ENCODE measurements at regions of chr16 and their contacts with region 1.

Region 1: GRCh38 chr16:79613009-79613408 is 12.5 kb upstream of the MAF start:
- DNase-seq: no peak
- ATAC-seq: no peak

Region 2: GRCh38 chr16:78220571-78220970 is 1392.4 kb before region 1 on chr16:
- intact Hi-C with region 1: loop called (anchors 5 kb)
- DNase-seq: no peak
- ATAC-seq: no peak

Region 3: GRCh38 chr16:79673635-79674034 is 60.6 kb after region 1 on chr16:
- intact Hi-C with region 1: no loop called
- DNase-seq: no peak
- ATAC-seq: no peak

Region 4: DNA sequence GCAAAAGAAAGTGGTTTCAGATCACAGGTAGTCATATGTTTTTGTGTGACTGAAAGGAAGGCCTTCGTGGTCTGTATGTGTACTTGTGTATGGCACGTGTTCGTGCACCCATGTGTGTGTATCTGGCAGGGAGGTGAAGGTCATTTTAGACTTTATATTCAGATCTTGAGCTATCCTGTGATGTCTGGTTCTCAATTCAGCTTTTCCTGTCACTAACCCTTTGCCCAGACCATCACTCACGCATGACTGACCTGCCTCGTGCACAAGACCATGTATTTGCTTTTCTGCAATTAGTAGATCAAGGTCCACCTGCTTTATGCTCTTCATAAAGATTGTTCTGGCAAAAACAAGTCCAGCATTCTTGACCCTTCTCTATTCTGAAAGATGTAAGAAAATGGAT is 127.2 kb after region 1 on chr16:
- intact Hi-C with region 1: no loop called
- DNase-seq: no peak
- ATAC-seq: no peak